Stomach (tissue), 19 donors: ENCODE measurements at regions of chr10 and their contacts with region 1.

Region 1: DNA sequence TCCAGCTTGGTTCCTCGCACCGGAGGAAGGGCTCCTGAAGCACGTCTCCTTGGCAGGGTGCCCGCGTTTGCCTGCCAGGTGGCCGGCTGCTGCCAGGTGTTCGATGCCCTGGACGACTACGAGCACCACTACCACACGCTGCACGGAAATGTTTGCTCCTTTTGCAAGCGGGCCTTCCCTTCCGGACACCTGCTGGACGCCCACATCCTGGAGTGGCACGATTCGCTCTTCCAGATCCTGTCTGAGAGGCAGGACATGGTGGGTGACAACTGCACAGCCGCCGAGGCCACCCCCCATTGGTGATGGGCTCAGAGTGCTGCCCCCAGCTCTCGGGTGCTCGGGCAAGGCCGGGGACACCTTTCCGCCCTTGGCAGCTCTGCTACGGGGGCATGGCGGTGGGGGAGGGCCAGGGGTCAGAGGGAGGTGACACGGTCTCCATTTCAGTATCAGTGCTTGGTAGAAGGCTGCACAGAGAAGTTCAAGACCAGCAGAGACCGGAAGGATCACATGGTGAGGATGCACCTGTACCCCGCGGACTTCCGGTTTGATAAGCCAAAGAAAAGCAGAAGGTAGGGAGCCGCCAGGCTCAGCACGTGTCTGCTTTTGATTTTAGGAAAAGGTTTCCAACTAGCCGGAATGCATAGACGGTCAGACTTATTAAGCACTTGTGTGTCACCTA is 1.1 kb downstream of the ZNF511 start:
- DNase-seq: peak; percentile 49 to 66
- H3K4me3 ChIP-seq: peak overlapping the region; percentile 88 to 100 (median 92)
- H3K27ac ChIP-seq: peak overlapping the region; percentile 68 to 98 (median 97)
- H3K4me1 ChIP-seq: peaks cover 32 to 51% (median 37%) of the 10 kb centered on the region in 4 donors
- H3K27me3 ChIP-seq: no peaks in the 10 kb centered on the region
- CTCF ChIP-seq: no peak
- EP300 ChIP-seq: no peak
- POLR2A ChIP-seq: no peak

Region 2: GRCh38 chr10:133257489-133258065 is 52.3 kb before region 1 on chr10:
- intact Hi-C with region 1: loop called (anchors 5 kb)
- DNase-seq: peak; percentile 85 to 86
- H3K4me3 ChIP-seq: peak overlapping the region in 3 of 4 donors; percentile 9 to 27 (median 13)
- H3K27ac ChIP-seq: peak overlapping the region; percentile 81 to 88 (median 83)
- H3K4me1 ChIP-seq: peaks cover 44 to 52% (median 51%) of the 10 kb centered on the region in 4 donors
- H3K27me3 ChIP-seq: peaks cover 0 to 7% (median 0%) of the 10 kb centered on the region in 3 donors
- CTCF ChIP-seq: peak in 5 of 7 experiments; percentile 12 to 54 (median 23)
- EP300 ChIP-seq: no peak
- POLR2A ChIP-seq: no peak

Region 3: GRCh38 chr10:133357285-133358151 is 47.7 kb after region 1 on chr10 and contains the start of gene FUOM:
- intact Hi-C with region 1: no loop called
- DNase-seq: peak in 1 of 2 donors; percentile 81
- H3K4me3 ChIP-seq: peak within 1 kb of the TSS; percentile 56 to 77 (median 64)
- H3K27ac ChIP-seq: peak within 1 kb of the TSS; percentile 39 to 75 (median 73)
- H3K4me1 ChIP-seq: peaks cover 23 to 46% (median 34%) of the 10 kb centered on the region in 4 donors
- H3K27me3 ChIP-seq: peaks cover 0 to 21% (median 0%) of the 10 kb centered on the region in 3 donors
- CTCF ChIP-seq: no peak
- EP300 ChIP-seq: no peak
- POLR2A ChIP-seq: no peak
- total RNA-seq, gene FUOM: 6.4 to 16.2 (median 7.2) TPM in 3 of 5 donors, not detected in the others